Sigmoid colon (tissue), 7 donors: ENCODE measurements at regions of chr6 and their contacts with region 1.

Region 1: DNA sequence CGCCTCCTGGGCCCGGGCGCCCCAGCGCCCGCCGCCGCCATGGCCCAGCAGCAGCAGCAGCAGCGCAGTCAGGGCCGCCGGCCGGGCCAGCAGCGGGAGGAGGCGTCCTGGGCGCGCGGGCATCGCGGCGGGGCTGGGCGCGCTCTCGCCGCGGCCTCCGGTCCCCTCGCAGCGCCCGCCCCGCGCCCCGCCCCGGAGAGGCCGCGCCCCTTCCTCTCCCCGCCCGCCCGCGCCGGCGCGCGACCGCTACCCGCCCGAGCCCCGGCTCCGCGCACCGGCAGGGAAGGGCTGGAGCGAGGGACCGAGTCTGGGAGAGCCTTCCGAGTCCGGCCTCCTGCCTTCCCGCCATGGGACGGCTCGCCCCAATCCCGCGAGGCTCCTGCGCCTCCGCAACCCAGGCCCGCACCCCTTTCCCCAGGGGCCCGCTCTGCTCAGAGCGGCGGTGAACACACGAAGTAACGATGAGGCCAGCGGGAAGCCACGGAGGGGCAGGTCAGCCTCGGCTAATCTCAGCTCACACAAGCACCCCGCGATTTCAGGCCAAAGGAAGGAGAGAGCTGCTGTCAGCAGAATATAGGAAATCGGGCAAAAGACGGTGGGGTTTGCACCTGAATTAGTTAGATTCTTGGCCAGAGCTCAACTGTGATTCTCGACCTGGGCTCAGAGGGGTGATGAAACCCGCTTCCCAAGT is at the start of gene TXNDC5:
- DNase-seq: peak; percentile 83
- H3K4me3 ChIP-seq: peak within 1 kb of the TSS; percentile 53 to 98 (median 88)
- H3K27ac ChIP-seq: peak within 1 kb of the TSS; percentile 73 to 85 (median 79)
- H3K4me1 ChIP-seq: peaks cover 0 to 15% (median 15%) of the 10 kb centered on the region in 4 donors
- H3K27me3 ChIP-seq: no peaks in the 10 kb centered on the region
- CTCF ChIP-seq: no peak
- EP300 ChIP-seq: no peak
- POLR2A ChIP-seq: no peak
- total RNA-seq, gene TXNDC5: 48.1 to 64.9 (median 52.9) TPM

Region 2: DNA sequence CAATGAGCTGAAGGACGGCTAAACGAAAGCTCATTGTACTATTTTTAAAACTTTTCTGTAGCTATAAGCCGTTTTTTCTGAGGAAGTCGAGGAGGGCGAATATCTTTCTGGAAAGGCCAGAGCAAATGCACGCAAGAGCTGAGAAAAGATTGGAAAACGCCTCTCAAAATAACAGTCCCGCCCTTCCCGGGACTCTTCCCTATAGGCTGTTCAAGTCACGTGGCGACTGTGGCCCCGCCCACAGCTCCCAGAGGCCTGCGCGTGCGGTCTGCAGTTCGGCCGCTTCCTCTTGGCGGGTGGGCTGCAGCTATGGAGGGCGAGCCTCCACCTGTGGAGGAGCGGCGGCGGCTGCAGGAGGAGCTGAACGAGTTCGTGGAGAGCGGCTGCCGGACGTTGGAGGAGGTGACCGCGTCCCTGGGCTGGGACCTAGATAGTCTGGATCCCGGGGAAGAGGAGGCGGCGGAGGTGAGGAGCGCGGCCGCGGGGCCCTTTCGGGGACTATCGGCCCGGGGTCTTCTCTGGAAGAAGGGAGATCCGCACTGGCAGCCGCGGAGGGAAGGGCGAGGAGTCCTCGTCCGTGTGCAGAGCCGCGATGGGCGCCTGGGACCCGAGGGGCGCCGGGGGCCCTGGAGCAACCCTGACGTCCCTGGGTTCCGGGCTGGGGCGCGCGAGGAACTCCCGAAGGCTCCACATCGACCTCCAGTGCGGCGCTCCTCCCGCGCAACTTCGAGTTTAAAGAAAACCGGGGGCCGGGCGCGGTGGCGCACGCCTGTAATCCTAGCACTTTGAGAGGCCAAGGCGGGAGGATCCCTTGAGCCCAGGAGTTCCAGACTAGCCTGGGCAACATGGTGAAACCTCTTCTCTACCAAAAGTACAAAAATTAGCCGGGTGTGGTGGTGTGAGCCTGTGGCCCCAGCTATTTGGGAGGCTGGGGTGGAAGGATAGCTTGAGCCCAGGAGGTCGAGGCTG is 320.6 kb before region 1 on chr6 and contains the start of gene SNRNP48:
- intact Hi-C with region 1: no loop called
- DNase-seq: peak; percentile 97
- H3K4me3 ChIP-seq: peak within 1 kb of the TSS; percentile 80 to 93 (median 92)
- H3K27ac ChIP-seq: peak within 1 kb of the TSS; percentile 66 to 84 (median 78)
- H3K4me1 ChIP-seq: peaks cover 0 to 29% (median 24%) of the 10 kb centered on the region in 4 donors
- H3K27me3 ChIP-seq: no peaks in the 10 kb centered on the region
- CTCF ChIP-seq: no peak
- EP300 ChIP-seq: no peak
- POLR2A ChIP-seq: peak; percentile 43 to 81
- total RNA-seq, gene SNRNP48: 12.5 to 18.6 (median 17.4) TPM

Region 3: DNA sequence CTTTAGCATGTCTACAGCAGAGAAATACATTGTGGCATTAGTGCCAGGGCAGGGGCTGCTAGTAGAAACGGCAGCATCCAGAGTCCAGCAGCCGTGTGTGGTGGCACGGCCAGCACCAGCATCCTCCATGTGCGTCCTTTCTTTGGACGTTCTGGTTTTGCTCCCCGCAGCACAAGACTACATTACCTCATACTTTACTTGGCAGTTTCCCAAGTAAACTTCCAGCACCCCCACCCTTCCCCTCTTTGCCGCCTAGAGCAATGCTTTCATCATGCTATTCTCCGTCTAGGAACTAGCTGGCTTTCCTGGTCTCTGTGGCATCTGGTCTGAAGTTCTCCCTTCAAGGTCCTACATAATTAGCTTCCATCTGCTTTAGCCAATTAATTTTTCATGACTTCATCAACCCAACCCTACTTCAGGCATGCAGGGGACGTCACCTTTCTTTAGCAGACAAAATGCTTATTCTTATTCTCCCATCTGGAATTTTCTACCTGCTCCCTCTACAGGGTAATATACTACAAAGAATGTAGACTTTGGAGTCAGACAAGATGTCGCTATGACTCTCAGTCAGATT is 85.8 kb after region 1 on chr6:
- intact Hi-C with region 1: loop called (anchors 5 kb)
- DNase-seq: peak; percentile 73
- H3K4me3 ChIP-seq: no peak overlapping the region
- H3K27ac ChIP-seq: peak overlapping the region in 2 of 4 donors; percentile 66 to 78
- H3K4me1 ChIP-seq: peaks cover 0 to 53% (median 41%) of the 10 kb centered on the region in 4 donors
- H3K27me3 ChIP-seq: peaks cover 0 to 5% (median 0%) of the 10 kb centered on the region in 3 donors
- CTCF ChIP-seq: peak in 1 of 4 experiments; percentile 5
- EP300 ChIP-seq: no peak
- POLR2A ChIP-seq: no peak

Region 4: DNA sequence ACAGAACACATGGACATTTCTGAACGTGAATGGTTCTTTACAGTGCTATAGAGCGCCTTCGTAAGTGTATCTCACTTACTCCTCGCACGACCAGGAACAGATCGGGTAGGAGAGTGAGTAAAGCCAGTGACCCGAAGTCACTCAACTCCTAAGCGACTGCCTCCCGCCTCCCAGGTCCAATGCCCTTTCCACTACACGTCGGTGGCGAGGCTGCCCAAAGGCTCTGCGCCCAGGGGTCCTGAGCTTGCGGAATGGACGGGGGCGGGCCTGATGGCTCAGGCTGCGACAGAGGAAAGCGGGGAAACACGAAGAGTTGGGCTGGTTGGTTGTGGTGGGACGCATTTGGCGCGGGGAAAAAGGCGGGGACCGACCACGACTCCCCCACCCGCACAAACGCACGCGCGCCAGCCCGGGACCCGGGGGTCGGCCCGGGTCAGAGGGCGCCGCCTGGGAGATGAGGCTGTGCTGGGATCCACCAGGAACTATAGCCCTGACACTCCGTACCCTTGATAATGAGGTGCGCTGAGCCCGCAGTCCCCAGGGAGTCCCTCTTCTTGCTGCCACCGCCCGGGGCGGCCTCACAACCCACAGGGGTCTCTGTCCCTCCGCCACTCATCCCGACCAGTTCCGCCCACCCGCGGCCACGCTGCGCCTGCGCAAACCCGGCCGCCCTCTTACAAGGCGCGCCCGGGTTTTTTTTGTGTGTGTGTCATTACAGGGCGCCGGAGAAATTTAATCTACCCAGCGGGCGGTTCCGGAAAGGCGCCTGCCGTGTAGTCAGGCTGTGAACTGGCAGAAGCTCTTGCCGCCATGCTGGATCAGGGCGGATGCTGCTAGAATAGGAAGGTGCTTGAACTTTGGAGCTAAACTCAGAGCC is 153.2 kb after region 1 on chr6 and contains the start of gene BLOC1S5:
- intact Hi-C with region 1: loop called (anchors 5 kb)
- DNase-seq: peak; percentile 98
- H3K4me3 ChIP-seq: peak within 1 kb of the TSS; percentile 62 to 99 (median 82)
- H3K27ac ChIP-seq: peak within 1 kb of the TSS; percentile 87 to 96 (median 89)
- H3K4me1 ChIP-seq: peaks cover 0 to 16% (median 7%) of the 10 kb centered on the region in 4 donors
- H3K27me3 ChIP-seq: no peaks in the 10 kb centered on the region
- CTCF ChIP-seq: no peak
- EP300 ChIP-seq: no peak
- POLR2A ChIP-seq: peak; percentile 25 to 44
- total RNA-seq, gene BLOC1S5: 10.8 to 16.2 (median 12.8) TPM